ENCODE measurements at regions of chr12 and their contacts with region 1.

Region 1: DNA sequence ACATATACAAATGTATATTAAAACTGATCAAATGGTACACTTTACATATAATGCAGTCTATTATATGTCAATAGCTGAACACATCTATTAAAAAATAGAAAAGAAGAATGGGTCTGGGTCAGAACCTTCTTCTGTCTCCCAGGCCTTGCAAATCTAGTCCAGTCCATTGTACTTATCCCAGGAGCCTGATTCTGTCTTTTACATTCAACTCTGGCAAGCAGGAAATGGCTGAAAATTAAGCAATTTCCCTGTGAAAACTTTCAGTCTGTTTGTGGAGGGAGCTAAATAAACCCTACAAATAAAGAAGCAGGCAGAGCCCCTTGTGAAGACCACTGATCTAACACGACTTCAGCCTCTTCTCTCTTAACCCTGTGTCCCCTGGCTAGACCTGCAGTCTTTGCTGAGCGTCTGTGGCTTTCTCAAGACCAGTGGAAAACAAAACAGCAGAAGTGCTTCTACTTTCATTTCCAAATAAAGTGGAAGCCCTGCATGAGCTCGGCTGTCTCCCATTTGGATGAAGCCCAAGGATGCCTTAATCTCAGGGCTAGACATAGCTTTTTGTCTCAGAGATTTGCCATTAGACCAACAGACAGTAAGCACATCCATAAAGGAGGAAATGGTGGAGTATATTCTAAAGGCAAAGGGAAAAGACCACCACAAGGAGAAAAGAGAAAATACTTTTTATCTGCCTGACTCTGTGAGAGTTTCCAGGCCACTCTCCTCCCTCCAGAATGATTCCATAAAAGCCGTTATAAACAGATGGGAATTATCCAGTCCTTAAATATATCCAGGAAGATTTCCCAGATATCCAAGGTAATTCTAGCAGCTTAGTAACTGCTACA is 48.2 kb downstream of the CRACR2A start:
- DNase-seq: no peak

Region 2: GRCh38 chr12:3747543-3747942 is 42.8 kb after region 1 on chr12:
- intact Hi-C with region 1: loop called in 1 of 2 experiments (anchors 2 kb)
- DNase-seq: no peak

Measured in posterior vena cava (tissue), 2 donors.